Activated T-helper 1 cell treated with anti-CD3 and anti-CD28 coated beads, Interleukin-12 subunit alpha, Interleukin-12 subunit beta, Interleukin-2, Interleukin-4 antibody, amounts not matched to agents 30 ng/mL and 10 ng/mL and 1 ng/mL, durations not matched to agents 14 hours and 24 hours and 36 hours (primary cell): ENCODE measurements at regions of chr5 and their contacts with region 1.

Region 1: GRCh38 chr5:55593115-55593472 is 58.3 kb upstream of the PLPP1 start:
- DNase-seq: no peak
- H3K4me3 Mint-ChIP-seq: no peak overlapping the region
- H3K27ac Mint-ChIP-seq: no peak overlapping the region
- H3K4me1 Mint-ChIP-seq: peaks cover 46% of the 10 kb centered on the region
- H3K27me3 Mint-ChIP-seq: no peaks in the 10 kb centered on the region

Region 2: GRCh38 chr5:55608595-55609349 is 15.7 kb after region 1 on chr5:
- intact Hi-C with region 1: loop called (anchors 2 kb)
- DNase-seq: no peak
- H3K4me3 Mint-ChIP-seq: no peak overlapping the region
- H3K27ac Mint-ChIP-seq: peak overlapping the region; percentile 31
- H3K4me1 Mint-ChIP-seq: peaks cover 13% of the 10 kb centered on the region
- H3K27me3 Mint-ChIP-seq: no peaks in the 10 kb centered on the region

Region 3: DNA sequence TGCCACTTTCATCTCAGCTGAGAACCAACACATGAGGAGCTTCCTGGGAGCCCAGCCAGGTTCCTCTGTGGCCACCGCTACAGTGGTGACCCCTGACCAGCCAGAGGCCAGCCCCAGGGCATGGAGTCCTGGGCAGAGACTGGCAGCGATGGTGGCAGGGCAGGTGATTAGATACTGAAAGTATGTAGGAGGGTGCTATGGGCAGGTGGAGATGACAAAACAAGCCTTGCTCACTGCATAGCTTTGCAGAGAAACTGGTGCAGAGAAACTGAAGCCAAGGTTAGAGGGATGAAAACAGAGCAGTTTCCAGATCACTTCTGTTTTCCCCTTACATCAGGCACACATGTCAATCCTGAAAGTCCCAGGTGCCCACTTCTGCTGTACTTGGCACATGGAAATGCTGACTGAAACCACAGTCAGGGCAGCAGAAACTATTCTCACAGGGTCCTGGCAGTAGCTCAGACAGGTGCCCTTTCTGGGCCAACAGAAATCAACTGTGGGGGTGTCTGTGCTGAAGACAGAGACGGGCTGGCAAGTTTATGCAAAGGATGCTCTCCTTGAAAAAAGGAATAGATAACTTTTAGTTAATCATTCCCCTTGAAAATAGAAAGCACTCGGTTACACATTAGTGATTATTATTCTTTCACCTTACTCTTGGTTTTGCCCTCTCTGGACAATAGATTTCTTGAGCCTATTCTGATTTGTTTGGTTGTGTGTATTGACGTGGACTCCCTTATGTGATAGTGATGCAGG is 549.7 kb after region 1 on chr5:
- intact Hi-C with region 1: no loop called
- DNase-seq: no peak
- H3K4me3 Mint-ChIP-seq: no peak overlapping the region
- H3K27ac Mint-ChIP-seq: peak overlapping the region; percentile 61
- H3K4me1 Mint-ChIP-seq: peaks cover 42% of the 10 kb centered on the region
- H3K27me3 Mint-ChIP-seq: no peaks in the 10 kb centered on the region